CD4-positive, alpha-beta memory T cell (primary cell): ENCODE measurements at regions of chr1 and their contacts with region 1.

Region 1: GRCh38 chr1:112882271-112882744 is 73.7 kb downstream of the SLC16A1 start:
- DNase-seq: no peak
- H3K4me3 ChIP-seq: no peak overlapping the region
- H3K4me3 Mint-ChIP-seq: no peak overlapping the region
- H3K27ac ChIP-seq: no peak overlapping the region
- H3K27ac Mint-ChIP-seq: no peak overlapping the region
- H3K4me1 ChIP-seq: no peaks in the 10 kb centered on the region
- H3K4me1 Mint-ChIP-seq: no peaks in the 10 kb centered on the region
- H3K27me3 ChIP-seq: no peaks in the 10 kb centered on the region
- H3K27me3 Mint-ChIP-seq: peaks cover 1 to 2% of the 10 kb centered on the region in 2 donors

Region 2: DNA sequence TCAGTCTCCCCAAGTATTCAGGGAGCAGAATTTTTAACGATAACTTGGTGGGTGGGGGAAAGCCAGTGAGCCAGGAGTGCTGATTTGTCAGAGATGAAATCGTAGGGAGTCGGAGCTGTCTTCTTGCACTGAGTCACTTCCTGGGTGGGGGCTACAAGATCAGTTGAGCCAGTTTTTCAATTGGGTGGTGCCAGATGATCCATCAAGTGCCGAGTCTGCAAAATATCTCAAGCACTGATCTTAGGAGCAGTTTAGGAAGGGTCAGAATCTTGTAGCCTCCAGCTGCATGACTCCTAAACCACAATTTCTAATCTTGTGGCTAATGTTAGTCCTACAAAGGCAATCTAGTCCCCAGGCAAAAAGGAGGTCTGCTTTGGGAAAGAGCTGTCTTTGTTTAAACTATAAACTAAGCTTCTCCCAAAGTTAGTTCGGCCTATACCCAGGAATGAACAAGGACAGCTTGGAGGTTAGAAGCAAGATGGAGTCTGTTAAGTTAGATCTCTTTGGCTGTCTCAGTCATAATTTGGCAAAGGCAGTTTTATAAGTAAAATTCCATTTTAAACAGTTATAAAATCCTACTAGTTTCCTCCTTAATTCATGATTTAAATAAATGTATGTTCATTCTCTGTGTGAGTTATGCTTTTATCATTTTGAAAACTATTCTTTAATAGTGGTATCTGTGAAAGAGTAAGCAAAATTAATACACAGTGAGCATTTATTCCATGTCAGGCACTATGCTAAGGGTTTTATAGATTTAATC is 21.9 kb after region 1 on chr1:
- CTCF ChIA-PET with region 1: interaction called, 11 read pairs
- POLR2A ChIA-PET with region 1: no interaction called
- intact Hi-C with region 1: no loop called
- DNase-seq: peak in 1 of 5 donors; percentile 4
- H3K4me3 ChIP-seq: no peak overlapping the region
- H3K4me3 Mint-ChIP-seq: peak overlapping the region in 7 of 8 donors; percentile 6 to 61 (median 42)
- H3K27ac ChIP-seq: no peak overlapping the region
- H3K27ac Mint-ChIP-seq: peak overlapping the region in 5 of 7 donors; percentile 0 to 85 (median 74)
- H3K4me1 ChIP-seq: peaks cover 25% of the 10 kb centered on the region
- H3K4me1 Mint-ChIP-seq: peaks cover 9 to 13% (median 11%) of the 10 kb centered on the region in 4 donors
- H3K27me3 ChIP-seq: no peaks in the 10 kb centered on the region
- H3K27me3 Mint-ChIP-seq: no peaks in the 10 kb centered on the region

Region 3: DNA sequence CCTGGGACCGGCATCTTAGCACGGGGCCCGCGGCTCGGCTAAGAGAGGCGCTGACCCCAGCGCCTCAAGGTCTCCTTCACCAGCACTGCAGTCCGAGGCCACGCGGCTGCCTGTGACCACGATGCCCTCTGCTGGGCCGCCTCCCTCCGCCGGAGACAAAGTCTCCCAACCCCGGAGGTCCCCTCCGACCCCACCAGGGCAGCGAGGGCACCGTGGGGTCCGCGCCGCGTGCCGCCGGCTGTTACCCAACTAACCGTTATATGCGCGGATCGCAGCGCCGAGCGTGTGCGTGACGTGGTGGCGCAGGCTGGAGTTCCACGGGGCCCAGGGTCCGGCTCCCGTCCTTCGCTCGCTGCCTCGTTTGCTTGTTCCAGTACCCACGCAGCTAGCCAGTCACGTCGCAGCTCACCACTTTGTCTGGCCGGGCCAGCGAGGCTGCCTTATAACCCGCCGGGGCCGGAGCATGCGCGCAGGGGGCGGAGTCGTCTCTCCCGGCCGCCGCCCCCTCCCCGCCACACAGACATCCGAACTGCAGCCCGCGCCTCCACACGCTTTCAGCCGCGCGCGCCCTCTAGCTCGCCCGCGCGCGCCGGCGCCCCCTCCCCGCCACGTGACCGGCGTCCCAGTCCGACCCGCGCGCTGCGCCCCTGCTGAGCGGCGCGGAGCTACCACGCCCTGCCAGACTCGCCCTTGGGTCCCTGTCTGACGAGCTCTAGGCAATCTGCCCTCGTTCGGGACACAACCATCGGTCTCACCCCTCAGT is 73.7 kb after region 1 on chr1 and contains the start of gene SLC16A1:
- CTCF ChIA-PET with region 1: interaction called, 4 read pairs
- POLR2A ChIA-PET with region 1: no interaction called
- intact Hi-C with region 1: loop called (anchors 1 kb)
- DNase-seq: peak; percentile 85 to 89 (median 87)
- H3K4me3 ChIP-seq: peak within 1 kb of the TSS; percentile 59 to 96
- H3K4me3 Mint-ChIP-seq: peak within 1 kb of the TSS; percentile 76 to 99 (median 97)
- H3K27ac ChIP-seq: peak within 1 kb of the TSS; percentile 80
- H3K27ac Mint-ChIP-seq: peak within 1 kb of the TSS; percentile 68 to 98 (median 95)
- H3K4me1 ChIP-seq: peaks cover 34% of the 10 kb centered on the region
- H3K4me1 Mint-ChIP-seq: peaks cover 38 to 73% (median 52%) of the 10 kb centered on the region in 4 donors
- H3K27me3 ChIP-seq: no peaks in the 10 kb centered on the region
- H3K27me3 Mint-ChIP-seq: no peaks in the 10 kb centered on the region
- total RNA-seq, gene SLC16A1: 9.7 to 12.7 TPM

Region 4: DNA sequence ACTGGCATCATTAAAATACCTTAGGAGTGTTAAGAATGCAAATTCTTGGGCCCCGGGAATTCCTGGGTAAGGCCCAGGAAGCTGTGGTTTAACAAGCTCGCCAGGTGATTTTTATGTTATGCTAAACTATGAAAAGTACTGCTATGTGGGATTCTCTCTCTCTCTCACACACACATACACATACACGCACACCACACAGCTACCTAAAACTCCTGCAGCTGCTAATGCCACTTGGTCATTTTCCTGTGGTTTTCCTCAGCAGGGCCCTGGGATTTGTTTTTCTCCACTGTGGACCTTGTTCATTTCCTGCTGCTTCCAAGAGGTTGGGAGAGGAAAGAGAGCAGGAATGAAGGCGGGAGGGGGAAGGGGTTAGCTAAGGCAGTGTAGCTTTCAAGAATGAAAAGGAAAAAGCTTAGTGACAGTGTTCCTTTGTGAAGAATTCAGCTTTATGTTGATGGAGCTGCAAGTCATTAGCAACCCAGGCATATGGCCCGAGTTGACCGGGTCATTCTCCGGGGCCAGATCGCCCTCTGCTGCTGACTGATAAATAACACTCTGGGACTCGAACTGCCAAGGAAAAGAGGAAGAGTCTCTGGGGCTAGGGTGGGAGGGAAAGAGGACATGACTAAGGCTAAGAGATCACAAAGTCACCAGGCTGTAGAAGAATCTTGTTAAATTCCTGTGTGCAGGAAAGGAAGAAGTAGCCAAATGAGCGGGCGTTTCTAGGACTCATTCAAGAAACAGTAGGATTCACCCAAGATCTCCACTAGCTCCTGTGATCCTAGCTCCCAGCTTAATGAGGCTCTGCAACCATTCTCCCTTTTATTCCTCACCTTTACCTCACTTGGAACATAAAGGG is 160.2 kb after region 1 on chr1:
- CTCF ChIA-PET with region 1: interaction called, 32 read pairs
- POLR2A ChIA-PET with region 1: no interaction called
- intact Hi-C with region 1: loop called (anchors 1 kb)
- DNase-seq: no peak
- H3K4me3 ChIP-seq: no peak overlapping the region
- H3K4me3 Mint-ChIP-seq: peak overlapping the region in 3 of 8 donors; percentile 12 to 32 (median 27)
- H3K27ac ChIP-seq: no peak overlapping the region
- H3K27ac Mint-ChIP-seq: peak overlapping the region in 5 of 7 donors; percentile 43 to 85 (median 78)
- H3K4me1 ChIP-seq: peaks cover 23% of the 10 kb centered on the region
- H3K4me1 Mint-ChIP-seq: peaks cover 20 to 41% (median 29%) of the 10 kb centered on the region in 4 donors
- H3K27me3 ChIP-seq: no peaks in the 10 kb centered on the region
- H3K27me3 Mint-ChIP-seq: no peaks in the 10 kb centered on the region

Region 5: DNA sequence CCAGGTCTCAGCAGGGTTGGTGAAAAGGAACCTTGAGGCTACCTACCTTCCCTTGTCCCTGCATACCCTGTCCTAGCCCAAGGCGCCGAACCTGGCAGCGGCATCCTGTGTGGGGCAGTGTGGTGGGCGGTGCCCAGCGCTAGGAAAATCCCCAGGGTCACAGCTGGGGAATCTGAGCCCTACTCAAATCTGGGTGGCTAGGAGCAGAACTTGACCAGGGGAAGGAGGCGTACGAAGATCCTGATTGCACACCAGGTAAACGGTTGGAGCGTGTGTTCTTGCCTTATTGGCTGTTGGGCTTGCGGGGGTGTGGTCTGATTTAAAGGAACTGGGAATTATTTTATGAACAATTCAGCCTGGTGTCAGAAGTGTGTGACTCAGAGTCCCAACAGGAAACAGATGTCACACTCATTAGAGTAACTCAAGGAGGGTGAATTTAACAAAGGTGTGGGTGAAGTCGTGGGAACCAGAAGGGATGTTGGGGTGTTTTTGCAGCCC is 309.3 kb after region 1 on chr1:
- CTCF ChIA-PET with region 1: no interaction called
- POLR2A ChIA-PET with region 1: no interaction called
- intact Hi-C with region 1: no loop called
- DNase-seq: no peak
- H3K4me3 ChIP-seq: no peak overlapping the region
- H3K4me3 Mint-ChIP-seq: no peak overlapping the region
- H3K27ac ChIP-seq: no peak overlapping the region
- H3K27ac Mint-ChIP-seq: no peak overlapping the region
- H3K4me1 ChIP-seq: no peaks in the 10 kb centered on the region
- H3K4me1 Mint-ChIP-seq: peaks cover 0 to 3% (median 0%) of the 10 kb centered on the region in 4 donors
- H3K27me3 ChIP-seq: no peaks in the 10 kb centered on the region
- H3K27me3 Mint-ChIP-seq: peaks cover 6 to 14% of the 10 kb centered on the region in 2 donors

Region 6: GRCh38 chr1:113479713-113480676 is 597.7 kb after region 1 on chr1:
- CTCF ChIA-PET with region 1: no interaction called
- POLR2A ChIA-PET with region 1: no interaction called
- intact Hi-C with region 1: no loop called
- DNase-seq: no peak
- H3K4me3 ChIP-seq: no peak overlapping the region
- H3K4me3 Mint-ChIP-seq: peak overlapping the region in 1 of 8 donors; percentile 32
- H3K27ac ChIP-seq: no peak overlapping the region
- H3K27ac Mint-ChIP-seq: no peak overlapping the region
- H3K4me1 ChIP-seq: no peaks in the 10 kb centered on the region
- H3K4me1 Mint-ChIP-seq: no peaks in the 10 kb centered on the region
- H3K27me3 ChIP-seq: no peaks in the 10 kb centered on the region
- H3K27me3 Mint-ChIP-seq: peaks cover 0 to 2% of the 10 kb centered on the region in 2 donors